ENCODE measurements at regions of chr1 and their contacts with region 1.

Region 1: GRCh38 chr1:186244825-186245224 is 130.2 kb downstream of the TPR start:
- DNase-seq: peak; percentile 29
- H3K4me3 ChIP-seq: no peak overlapping the region
- H3K27ac ChIP-seq: no peak overlapping the region
- H3K4me1 ChIP-seq: peaks cover 25% of the 10 kb centered on the region
- CTCF ChIP-seq: peak; percentile 68

Region 2: DNA sequence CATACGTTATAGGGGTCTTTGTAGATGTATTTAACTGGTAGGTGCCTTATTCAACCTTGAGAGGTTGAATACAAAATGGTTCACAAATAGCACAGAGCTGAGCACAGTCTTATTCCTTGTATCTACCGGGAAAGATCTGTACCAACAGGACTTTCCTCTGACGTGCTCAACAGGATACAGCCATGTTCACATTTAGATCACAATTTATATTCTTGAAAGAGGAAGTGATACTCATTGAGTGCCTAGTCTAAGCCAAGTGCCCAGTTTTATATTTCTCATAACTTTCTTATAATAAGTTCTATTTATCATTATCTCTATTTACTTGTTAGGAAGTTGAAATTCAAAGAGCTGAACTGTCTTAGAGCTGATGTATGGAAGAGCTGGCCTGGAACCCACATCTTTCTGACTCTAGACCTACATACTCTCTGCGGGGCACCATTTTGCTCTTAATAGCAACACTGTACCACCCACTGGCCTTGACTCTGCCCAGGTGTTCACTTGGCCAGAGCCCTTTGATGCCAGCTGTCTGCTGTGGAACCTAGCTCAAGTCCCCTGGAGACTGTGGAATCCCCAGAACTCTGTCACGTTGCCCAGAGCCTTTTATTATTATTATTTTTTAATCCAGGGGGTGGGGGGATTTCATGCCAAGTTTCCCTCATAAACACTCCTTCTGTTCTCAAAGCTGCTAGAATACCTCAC is 26.0 kb before region 1 on chr1:
- CTCF ChIA-PET with region 1: interaction called, 3 read pairs
- POLR2A ChIA-PET with region 1: interaction called, 11 read pairs
- intact Hi-C with region 1: loop called (anchors 2 kb)
- DNase-seq: peak; percentile 79
- H3K4me3 ChIP-seq: peak overlapping the region; percentile 43
- H3K27ac ChIP-seq: peak overlapping the region; percentile 83
- H3K4me1 ChIP-seq: peaks cover 32% of the 10 kb centered on the region
- CTCF ChIP-seq: no peak